ENCODE measurements at regions of chr3 and their contacts with region 1.

Region 1: DNA sequence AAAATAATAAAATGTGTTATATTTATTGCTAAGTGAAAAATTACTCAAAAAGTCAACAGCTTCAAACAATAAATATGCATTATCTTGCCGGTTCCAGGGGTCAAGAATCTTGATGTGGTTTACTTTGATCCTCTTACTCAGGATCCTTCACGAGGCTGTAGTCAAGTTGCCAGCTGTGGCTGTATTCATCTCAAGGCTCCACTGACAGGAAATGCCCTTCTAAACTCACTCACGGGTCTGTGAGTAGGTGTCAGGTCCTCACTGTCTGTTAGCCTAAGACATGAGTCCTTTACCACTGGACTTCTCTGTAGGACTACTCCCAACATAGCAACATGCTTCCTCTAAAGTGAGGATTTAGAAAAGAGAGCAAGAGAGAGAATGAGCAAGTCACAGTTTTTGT is 983.0 kb downstream of the SI start:
- DNase-seq: no peak
- H3K4me3 Mint-ChIP-seq: no peak overlapping the region
- H3K27ac Mint-ChIP-seq: no peak overlapping the region
- H3K4me1 Mint-ChIP-seq: no peaks in the 10 kb centered on the region
- H3K27me3 Mint-ChIP-seq: no peaks in the 10 kb centered on the region
- CTCF ChIP-seq: no peak

Region 2: DNA sequence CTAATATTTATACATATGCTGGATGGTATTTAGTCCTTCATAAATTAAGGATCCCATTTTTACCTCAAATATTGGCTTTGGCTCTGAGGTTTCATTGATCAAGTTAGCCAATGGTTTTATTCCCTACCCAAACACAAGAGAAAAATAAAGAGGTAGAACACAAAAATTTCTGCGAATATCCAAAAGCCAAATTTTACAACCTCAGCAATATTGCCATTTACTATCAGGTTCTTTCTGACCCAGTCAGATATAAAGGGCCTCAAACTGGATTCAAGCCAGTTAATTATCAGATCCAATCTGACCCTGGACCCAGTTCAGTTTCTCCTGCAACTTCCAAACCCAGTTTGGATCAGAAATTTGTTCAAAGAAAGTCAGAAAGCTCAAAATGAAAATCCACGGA is 15.1 kb before region 1 on chr3:
- CTCF ChIA-PET with region 1: no interaction called
- intact Hi-C with region 1: loop called (anchors 2 kb)
- DNase-seq: no peak
- H3K4me3 Mint-ChIP-seq: no peak overlapping the region
- H3K27ac Mint-ChIP-seq: no peak overlapping the region
- H3K4me1 Mint-ChIP-seq: no peaks in the 10 kb centered on the region
- H3K27me3 Mint-ChIP-seq: no peaks in the 10 kb centered on the region
- CTCF ChIP-seq: no peak

Measured in Calu3 (cell line).